ENCODE measurements at regions of chr19 and their contacts with region 1.

Region 1: GRCh38 chr19:47075179-47075810 is 26.9 kb upstream of the TMEM160 start:
- DNase-seq: peak in 1 of 6 donors; percentile 58
- ATAC-seq: no peak
- H3K4me3 ChIP-seq: no peak overlapping the region
- H3K27ac ChIP-seq: no peak overlapping the region
- H3K4me1 ChIP-seq: no peaks in the 10 kb centered on the region
- H3K27me3 ChIP-seq: no peaks in the 10 kb centered on the region
- CTCF ChIP-seq: no peak

Region 2: DNA sequence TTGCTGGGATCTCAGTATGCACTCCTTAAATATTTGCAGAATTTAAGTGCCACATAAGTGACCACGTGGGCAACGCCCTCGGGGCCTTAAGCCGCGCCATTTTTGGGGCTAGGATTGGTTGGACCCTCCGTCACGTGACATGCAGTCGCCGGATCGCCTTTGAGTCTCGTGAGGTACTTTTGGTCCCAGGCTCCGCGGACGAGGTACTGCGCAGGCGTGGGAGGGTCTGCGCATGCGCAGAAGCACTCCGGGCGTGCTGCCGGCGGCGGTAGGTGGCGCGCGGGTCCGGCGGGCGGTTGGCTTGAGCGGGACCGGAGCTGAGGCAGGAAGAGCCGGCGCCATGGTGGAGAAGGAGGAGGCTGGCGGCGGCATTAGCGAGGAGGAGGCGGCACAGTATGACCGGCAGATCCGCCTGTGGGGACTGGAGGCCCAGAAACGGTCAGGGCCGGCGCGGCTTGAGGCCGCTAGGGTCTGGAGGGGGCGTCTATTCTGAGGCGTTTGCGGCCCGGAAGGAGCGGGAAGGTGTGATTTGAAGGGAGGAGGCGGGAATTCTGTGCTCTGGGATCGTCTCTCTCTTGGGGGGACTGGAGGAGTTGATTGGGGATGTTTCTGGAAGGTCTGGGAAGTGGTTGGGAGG is 55.4 kb after region 1 on chr19 and contains the start of gene SAE1:
- intact Hi-C with region 1: loop called in 2 of 3 experiments (anchors 2 to 5 kb)
- DNase-seq: peak; percentile 90 to 98 (median 96)
- ATAC-seq: peak; percentile 93 to 97 (median 96)
- H3K4me3 ChIP-seq: peak within 1 kb of the TSS; percentile 57 to 69 (median 64)
- H3K27ac ChIP-seq: peak within 1 kb of the TSS; percentile 47 to 83 (median 54)
- H3K4me1 ChIP-seq: peaks cover 0 to 5% (median 3%) of the 10 kb centered on the region in 3 donors
- H3K27me3 ChIP-seq: no peaks in the 10 kb centered on the region
- CTCF ChIP-seq: peak in 3 of 4 donors; percentile 14 to 40 (median 18)
- total RNA-seq, gene SAE1: 14.8 to 25.8 (median 20.1) TPM

Region 3: DNA sequence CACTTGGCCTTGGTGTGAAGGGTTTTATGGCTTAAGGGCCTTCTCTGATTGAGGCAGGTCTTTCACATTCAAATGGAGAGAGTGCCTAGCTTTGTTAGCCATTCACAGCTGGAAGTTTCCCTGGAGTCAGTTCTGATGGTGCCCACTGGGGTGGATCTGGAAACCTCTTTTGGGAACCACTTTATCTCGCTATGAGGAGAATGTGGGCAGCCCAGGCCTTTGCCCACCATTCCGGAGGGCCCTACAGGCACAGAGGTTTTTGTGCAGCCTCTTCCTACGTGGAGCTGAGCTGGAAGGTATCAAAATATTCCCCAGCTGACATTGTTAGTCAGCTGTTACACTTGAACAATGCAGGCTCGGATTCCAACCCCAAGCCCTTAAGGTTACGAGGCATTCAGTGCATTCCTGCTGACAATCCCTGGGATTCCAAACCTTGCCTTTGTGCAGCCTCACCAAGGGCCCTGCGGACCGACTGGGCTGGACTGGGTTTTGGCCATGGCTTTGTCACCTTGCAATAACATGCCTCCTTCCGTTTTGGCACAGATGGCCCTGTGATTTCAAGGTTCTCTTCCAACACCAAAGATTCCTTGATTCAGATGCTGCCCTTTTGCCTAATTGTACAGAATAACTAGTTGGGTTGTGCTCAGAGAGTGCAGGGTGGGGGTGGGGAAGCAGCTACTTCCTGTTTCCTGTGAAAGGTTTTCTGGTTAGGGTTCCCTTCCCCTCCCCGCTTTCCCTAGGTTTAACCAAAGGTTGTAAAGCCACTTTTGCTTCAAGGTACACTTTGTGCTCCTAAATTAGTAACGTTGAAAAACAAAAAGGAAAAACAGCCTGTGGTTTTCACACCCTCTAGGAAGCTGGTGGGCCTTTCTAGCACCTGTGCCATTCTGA is 82.4 kb after region 1 on chr19:
- intact Hi-C with region 1: no loop called
- DNase-seq: no peak
- ATAC-seq: peak in 3 of 4 donors; percentile 42 to 53 (median 52)
- H3K4me3 ChIP-seq: no peak overlapping the region
- H3K27ac ChIP-seq: peak overlapping the region in 2 of 4 donors; percentile 15 to 16
- H3K4me1 ChIP-seq: peaks cover 4 to 5% (median 4%) of the 10 kb centered on the region in 3 donors
- H3K27me3 ChIP-seq: no peaks in the 10 kb centered on the region
- CTCF ChIP-seq: no peak

Region 4: GRCh38 chr19:47363758-47364531 is 288.6 kb after region 1 on chr19:
- intact Hi-C with region 1: no loop called
- DNase-seq: no peak
- ATAC-seq: no peak
- H3K4me3 ChIP-seq: no peak overlapping the region
- H3K27ac ChIP-seq: no peak overlapping the region
- H3K4me1 ChIP-seq: no peaks in the 10 kb centered on the region
- H3K27me3 ChIP-seq: no peaks in the 10 kb centered on the region
- CTCF ChIP-seq: no peak

Measured in pancreas (tissue), 10 donors.